ENCODE measurements at regions of chr6 and their contacts with region 1.

Region 1: GRCh38 chr6:123965894-123966293 is 162.2 kb downstream of the NKAIN2 start:
- DNase-seq: no peak
- ATAC-seq: peak; percentile 38 to 70

Region 2: GRCh38 chr6:123747515-123747914 is 218.4 kb before region 1 on chr6:
- intact Hi-C with region 1: no loop called
- DNase-seq: no peak
- ATAC-seq: no peak

Region 3: DNA sequence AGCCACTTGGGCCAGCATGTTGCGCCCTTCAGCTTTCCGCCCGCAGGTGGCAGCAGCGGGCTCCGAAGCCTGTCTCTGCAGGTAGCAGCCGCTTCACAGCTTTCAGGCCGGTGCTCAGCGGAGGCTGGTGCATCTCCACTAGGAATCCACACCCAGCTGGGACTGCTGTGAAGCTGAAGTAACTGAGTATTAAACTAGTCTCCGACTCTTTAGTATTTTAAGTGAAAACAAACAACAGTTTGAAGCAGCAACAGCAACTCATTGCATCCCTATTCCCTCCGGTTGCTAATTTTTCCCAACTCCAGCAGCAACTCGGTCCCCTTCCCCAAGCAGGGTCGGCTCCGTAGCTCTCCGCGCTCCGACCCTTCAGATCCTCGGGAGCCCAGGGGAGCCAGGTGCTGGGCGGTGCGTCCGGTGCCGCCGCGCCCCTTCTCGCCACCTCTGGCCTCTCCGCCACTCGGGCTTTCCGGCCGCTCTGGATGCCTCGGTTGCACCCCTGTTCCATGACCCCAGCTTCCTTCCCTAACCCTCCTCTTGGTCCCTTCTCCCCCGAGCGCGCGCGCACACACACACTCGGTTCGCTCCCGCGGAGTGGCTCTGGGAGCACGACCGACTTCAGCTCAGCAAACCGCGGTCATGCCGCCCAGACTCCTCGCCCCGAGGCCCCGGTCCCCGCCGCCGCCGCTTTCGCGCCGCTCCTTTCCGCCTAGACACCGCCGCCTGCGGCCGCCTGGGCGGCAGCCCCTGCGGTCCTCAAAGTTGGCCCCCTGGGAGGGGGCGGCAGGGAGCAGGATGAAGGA is 163.0 kb before region 1 on chr6:
- intact Hi-C with region 1: loop called in 1 of 2 experiments (anchors 5 kb)
- DNase-seq: peak; percentile 80
- ATAC-seq: peak; percentile 94 to 97